Left ventricle myocardium inferior (tissue), 1 donor: ENCODE measurements at regions of chr10 and their contacts with region 1.

Region 1: DNA sequence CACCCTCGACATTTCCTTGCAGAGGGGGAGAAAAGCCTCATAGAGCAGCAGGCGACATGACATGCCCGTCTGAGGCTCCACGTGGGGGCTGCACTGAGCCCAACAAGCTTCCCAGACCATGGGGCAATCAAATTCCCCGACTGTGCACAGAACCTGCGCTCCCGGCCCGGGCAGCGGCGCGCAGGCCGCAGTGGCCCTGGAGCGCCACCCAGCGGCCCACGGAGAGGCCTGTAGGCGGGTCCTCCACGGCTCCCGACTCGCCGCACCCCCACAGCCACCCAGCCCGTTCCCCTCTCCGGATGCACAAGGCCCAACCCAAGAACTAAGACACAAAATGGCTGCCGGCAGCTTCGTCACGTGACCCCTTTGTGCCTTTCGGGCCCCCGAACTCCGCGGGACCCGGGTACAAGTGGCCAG is 816 bp downstream of the EPC1 start:
- DNase-seq: peak; percentile 96
- H3K4me3 ChIP-seq: peak overlapping the region; percentile 95
- H3K27ac ChIP-seq: peak overlapping the region; percentile 100
- H3K4me1 ChIP-seq: peaks cover 88% of the 10 kb centered on the region
- H3K27me3 ChIP-seq: no peaks in the 10 kb centered on the region
- CTCF ChIP-seq: peak; percentile 97

Region 2: DNA sequence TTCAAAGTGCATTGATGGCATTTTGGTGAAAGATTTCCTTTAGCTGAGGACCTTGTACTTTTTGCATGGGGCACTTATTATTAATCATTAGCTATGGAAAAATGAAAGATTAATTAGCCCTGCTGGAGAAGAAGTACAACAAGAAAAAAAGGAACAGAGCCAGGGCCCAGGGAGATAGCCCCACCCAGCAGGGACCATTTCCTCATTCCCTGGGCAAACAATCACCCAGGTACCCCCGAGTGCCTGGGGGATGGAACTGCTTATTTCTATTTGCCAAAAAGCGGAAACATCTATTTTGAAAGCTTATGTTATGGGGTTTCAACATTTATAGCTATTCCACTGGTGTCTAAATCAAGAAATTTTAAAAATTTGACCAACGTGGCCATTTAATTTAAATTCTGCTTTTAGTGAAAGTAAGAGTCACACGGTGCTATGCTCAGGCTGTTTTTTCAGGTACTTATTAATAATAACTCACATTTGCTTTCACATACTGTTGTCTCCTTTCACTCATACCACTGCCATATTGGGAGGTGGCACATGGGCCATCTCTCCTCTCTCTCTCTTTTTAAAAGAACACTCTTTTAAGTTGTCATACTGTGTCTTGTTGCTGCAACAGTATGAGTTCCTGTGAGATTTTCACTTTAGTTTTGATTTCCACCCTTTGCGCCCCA is 146.3 kb before region 1 on chr10:
- intact Hi-C with region 1: no loop called
- DNase-seq: no peak
- H3K4me3 ChIP-seq: no peak overlapping the region
- H3K27ac ChIP-seq: no peak overlapping the region
- H3K4me1 ChIP-seq: no peaks in the 10 kb centered on the region
- H3K27me3 ChIP-seq: no peaks in the 10 kb centered on the region
- CTCF ChIP-seq: no peak

Region 3: DNA sequence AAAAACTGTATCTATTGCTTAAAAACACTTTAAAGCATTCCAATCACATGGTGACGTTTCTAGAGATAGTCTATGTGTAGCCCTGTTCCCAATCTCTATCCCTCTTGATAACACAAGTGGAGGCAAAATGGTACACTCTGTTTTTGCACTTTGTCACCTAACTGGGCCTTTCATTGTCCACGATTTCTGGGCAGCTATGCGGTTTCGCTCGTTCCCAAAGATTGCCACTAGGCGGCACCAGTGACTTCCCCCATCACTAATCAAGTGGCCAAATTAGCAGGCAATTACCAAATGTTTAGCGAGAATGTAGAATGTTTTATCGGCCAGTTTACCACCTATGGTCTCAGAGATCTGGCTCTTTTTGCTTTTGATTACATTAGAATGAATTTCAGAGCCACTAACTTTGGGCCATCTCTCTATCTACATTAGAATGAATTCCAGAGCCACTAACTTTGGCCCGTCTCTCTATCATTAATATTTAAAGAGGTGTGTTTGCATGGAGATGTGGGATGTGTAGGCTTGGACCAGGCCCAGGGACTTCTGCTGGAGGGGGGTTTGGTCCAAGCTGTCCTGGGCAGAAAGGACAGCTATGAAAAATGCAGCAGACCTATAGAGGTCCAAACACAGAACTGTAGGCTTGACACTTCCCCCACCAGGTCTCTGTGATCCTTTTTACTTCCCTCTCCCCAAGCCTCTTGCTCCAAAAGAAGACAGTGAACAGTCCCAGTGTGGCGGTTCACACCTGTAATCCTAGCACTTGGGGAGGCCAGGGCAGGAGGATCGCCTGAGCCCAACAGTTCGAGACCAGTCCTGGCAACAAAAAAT is 89.3 kb before region 1 on chr10:
- intact Hi-C with region 1: loop called (anchors 5 kb)
- DNase-seq: peak; percentile 64
- H3K4me3 ChIP-seq: no peak overlapping the region
- H3K27ac ChIP-seq: no peak overlapping the region
- H3K4me1 ChIP-seq: no peaks in the 10 kb centered on the region
- H3K27me3 ChIP-seq: no peaks in the 10 kb centered on the region
- CTCF ChIP-seq: peak; percentile 92